Naive thymus-derived CD4-positive, alpha-beta T cell (primary cell): ENCODE measurements at regions of chr1 and their contacts with region 1.

Region 1: DNA sequence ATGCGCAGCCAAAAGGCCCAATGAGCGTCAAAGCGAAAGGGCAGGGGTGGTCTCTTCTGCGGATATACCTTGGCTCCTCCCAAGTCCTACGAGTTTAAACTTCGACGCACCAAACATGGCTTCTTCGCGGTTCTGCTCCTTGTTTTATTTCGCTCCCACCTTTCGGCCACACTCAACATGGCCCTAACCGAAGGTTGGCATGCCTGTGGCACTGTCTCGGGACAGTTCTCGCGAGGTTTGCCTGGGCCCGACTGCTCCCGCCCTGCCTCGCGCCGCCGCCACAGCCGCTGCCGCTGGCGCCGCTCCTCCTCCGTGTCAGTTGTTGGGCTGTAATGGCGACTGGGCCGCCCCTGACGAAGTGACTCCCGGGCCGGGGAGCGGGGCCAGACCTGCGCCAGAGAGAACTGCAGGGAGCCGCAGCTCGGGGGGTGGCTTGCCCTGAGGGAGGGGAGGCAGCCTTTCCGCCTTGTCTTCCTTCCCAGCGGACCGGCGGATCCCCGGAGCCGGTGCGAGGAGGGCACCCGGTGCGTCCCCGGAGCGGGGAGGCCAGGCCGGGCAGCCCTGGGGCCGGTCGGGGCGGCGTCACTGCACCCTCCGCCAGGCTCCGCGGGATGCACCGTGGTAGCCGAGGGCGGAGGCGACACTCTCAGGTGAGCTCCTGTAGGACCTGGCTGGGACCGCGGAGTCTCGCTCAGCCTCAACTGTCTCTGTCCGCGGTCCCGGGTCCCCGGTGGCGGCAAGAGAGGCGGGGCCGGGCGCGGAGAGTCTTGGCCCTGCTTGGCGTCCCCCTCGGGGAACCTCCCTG is at the start of gene CEP350:
- DNase-seq: peak; percentile 93 to 99 (median 98)
- ATAC-seq: peak; percentile 92
- H3K4me3 ChIP-seq: peak within 1 kb of the TSS; percentile 67
- H3K4me3 Mint-ChIP-seq: peak within 1 kb of the TSS; percentile 81 to 97 (median 93)
- H3K27ac ChIP-seq: peak within 1 kb of the TSS; percentile 95
- H3K27ac Mint-ChIP-seq: peak within 1 kb of the TSS; percentile 91 to 99 (median 97)
- H3K4me1 ChIP-seq: peaks cover 32 to 42% of the 10 kb centered on the region in 2 donors
- H3K4me1 Mint-ChIP-seq: peaks cover 34 to 72% (median 62%) of the 10 kb centered on the region in 7 donors
- H3K27me3 ChIP-seq: no peaks in the 10 kb centered on the region
- H3K27me3 Mint-ChIP-seq: no peaks in the 10 kb centered on the region
- total RNA-seq, gene CEP350: 56.1 to 90.1 (median 64.4) TPM

Region 2: GRCh38 chr1:179034720-179035119 is 920.0 kb before region 1 on chr1:
- CTCF ChIA-PET with region 1: no interaction called
- POLR2A ChIA-PET with region 1: no interaction called
- intact Hi-C with region 1: loop called in 1 of 2 experiments (anchors 10 kb)
- DNase-seq: no peak
- ATAC-seq: peak; percentile 60
- H3K4me3 ChIP-seq: no peak overlapping the region
- H3K4me3 Mint-ChIP-seq: peak overlapping the region in 5 of 10 donors; percentile 10 to 59 (median 21)
- H3K27ac ChIP-seq: no peak overlapping the region
- H3K27ac Mint-ChIP-seq: peak overlapping the region in 7 of 9 donors; percentile 0 to 91 (median 74)
- H3K4me1 ChIP-seq: peaks cover 26 to 33% of the 10 kb centered on the region in 2 donors
- H3K4me1 Mint-ChIP-seq: peaks cover 66 to 92% (median 80%) of the 10 kb centered on the region in 7 donors
- H3K27me3 ChIP-seq: no peaks in the 10 kb centered on the region
- H3K27me3 Mint-ChIP-seq: no peaks in the 10 kb centered on the region

Region 3: DNA sequence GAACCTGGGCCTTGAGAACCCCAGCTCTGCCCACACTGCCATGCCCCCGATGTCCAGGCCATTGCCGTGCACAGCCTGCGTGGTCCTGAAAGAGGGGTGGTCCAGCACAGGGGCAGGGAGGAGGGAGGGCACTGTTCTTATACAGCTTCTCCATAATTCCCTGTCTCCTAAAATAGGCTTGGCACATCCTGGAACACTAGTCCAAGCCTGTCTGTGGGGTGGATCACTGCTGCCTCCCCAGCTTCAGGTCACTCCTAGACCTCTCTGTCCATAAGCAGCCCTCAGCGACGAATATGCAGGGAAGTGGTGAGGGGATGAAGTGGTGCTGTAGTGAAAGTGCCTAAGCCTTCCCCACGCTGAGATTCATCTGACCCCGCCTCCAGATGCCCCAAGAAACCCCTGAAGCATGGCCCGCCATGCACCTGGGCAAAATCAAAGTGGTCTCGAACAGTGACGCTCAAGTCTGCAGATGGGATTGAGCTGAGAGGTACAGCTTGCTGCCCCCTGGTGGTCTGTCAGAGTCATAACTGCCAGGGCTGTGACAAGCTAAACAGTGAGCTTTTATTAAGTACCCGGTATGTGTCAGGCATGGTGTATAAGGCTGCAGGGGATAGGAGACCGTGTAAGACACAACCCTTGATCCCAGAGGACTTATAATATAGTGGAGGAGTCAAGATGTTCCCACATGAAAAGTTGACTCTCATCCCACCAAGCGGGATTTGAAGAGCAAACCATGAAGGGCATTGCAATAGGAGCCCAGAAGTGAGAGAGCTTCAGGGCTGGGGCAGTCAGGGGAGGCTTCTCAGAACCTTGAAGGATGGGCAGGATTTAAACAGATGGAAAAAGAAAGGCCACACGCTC is 145.0 kb before region 1 on chr1:
- CTCF ChIA-PET with region 1: interaction called, 4 read pairs
- POLR2A ChIA-PET with region 1: interaction called, 7 read pairs
- intact Hi-C with region 1: loop called in 1 of 2 experiments (anchors 1 kb)
- DNase-seq: peak; percentile 53 to 82 (median 78)
- ATAC-seq: peak; percentile 87
- H3K4me3 ChIP-seq: no peak overlapping the region
- H3K4me3 Mint-ChIP-seq: peak overlapping the region in 5 of 10 donors; percentile 20 to 46 (median 32)
- H3K27ac ChIP-seq: no peak overlapping the region
- H3K27ac Mint-ChIP-seq: peak overlapping the region in 6 of 9 donors; percentile 2 to 82 (median 26)
- H3K4me1 ChIP-seq: peaks cover 6 to 13% of the 10 kb centered on the region in 2 donors
- H3K4me1 Mint-ChIP-seq: peaks cover 1 to 13% (median 12%) of the 10 kb centered on the region in 7 donors
- H3K27me3 ChIP-seq: no peaks in the 10 kb centered on the region
- H3K27me3 Mint-ChIP-seq: peaks cover 0 to 6% (median 0%) of the 10 kb centered on the region in 5 donors

Region 4: GRCh38 chr1:180027949-180028445 is 73.3 kb after region 1 on chr1:
- CTCF ChIA-PET with region 1: no interaction called
- POLR2A ChIA-PET with region 1: interaction called, 3 read pairs
- intact Hi-C with region 1: loop called in 1 of 2 experiments (anchors 5 kb)
- DNase-seq: no peak
- ATAC-seq: no peak
- H3K4me3 ChIP-seq: no peak overlapping the region
- H3K4me3 Mint-ChIP-seq: no peak overlapping the region
- H3K27ac ChIP-seq: no peak overlapping the region
- H3K27ac Mint-ChIP-seq: no peak overlapping the region
- H3K4me1 ChIP-seq: no peaks in the 10 kb centered on the region
- H3K4me1 Mint-ChIP-seq: peaks cover 0 to 13% (median 0%) of the 10 kb centered on the region in 7 donors
- H3K27me3 ChIP-seq: no peaks in the 10 kb centered on the region
- H3K27me3 Mint-ChIP-seq: no peaks in the 10 kb centered on the region

Region 5: GRCh38 chr1:180680558-180681144 is 726.0 kb after region 1 on chr1:
- CTCF ChIA-PET with region 1: no interaction called
- POLR2A ChIA-PET with region 1: no interaction called
- intact Hi-C with region 1: no loop called
- DNase-seq: no peak
- ATAC-seq: no peak
- H3K4me3 ChIP-seq: no peak overlapping the region
- H3K4me3 Mint-ChIP-seq: no peak overlapping the region
- H3K27ac ChIP-seq: no peak overlapping the region
- H3K27ac Mint-ChIP-seq: no peak overlapping the region
- H3K4me1 ChIP-seq: no peaks in the 10 kb centered on the region
- H3K4me1 Mint-ChIP-seq: peaks cover 0 to 15% (median 4%) of the 10 kb centered on the region in 7 donors
- H3K27me3 ChIP-seq: no peaks in the 10 kb centered on the region
- H3K27me3 Mint-ChIP-seq: no peaks in the 10 kb centered on the region

Region 6: DNA sequence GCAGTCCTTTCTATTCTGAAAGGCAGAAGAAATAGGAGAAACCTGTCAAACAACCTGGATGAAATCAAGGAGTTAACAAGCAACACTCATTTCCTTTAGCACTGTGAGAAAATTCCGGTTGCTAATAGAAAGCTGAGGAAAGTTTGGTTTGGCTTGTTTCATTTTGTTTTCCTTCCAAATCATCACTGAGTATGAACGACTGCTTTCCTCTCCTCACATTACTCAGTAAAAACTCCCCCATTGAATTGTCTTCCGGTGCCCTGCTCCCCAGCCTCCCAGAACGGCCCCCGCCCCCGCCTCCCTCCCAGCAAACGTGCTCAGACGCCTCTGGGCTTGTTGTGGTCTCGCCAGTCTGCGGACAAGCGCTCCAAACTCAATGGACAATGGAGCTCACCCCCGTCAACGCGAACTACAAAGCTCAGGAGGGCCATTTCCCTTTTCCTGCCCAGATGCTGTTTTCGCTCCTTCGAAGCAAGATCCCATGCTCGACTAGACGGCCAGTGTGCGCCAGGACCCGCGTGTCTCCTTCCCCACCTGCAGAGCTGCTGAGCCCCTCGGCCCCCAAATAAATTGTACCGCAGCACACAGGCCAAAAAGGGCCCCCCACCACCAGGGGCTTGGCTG is 1067.2 kb after region 1 on chr1:
- CTCF ChIA-PET with region 1: no interaction called
- POLR2A ChIA-PET with region 1: no interaction called
- intact Hi-C with region 1: loop called in 1 of 2 experiments (anchors 2 kb)
- DNase-seq: peak; percentile 12 to 67 (median 33)
- ATAC-seq: peak; percentile 21
- H3K4me3 ChIP-seq: peak overlapping the region; percentile 84
- H3K4me3 Mint-ChIP-seq: peak overlapping the region; percentile 92 to 98 (median 94)
- H3K27ac ChIP-seq: peak overlapping the region; percentile 84
- H3K27ac Mint-ChIP-seq: peak overlapping the region; percentile 93 to 100 (median 97)
- H3K4me1 ChIP-seq: peaks cover 21 to 22% of the 10 kb centered on the region in 2 donors
- H3K4me1 Mint-ChIP-seq: peaks cover 17 to 59% (median 48%) of the 10 kb centered on the region in 7 donors
- H3K27me3 ChIP-seq: no peaks in the 10 kb centered on the region
- H3K27me3 Mint-ChIP-seq: peaks cover 0 to 25% (median 0%) of the 10 kb centered on the region in 5 donors